Heart right ventricle (tissue), 16 donors: ENCODE measurements at regions of chr13 and their contacts with region 1.

Region 1: DNA sequence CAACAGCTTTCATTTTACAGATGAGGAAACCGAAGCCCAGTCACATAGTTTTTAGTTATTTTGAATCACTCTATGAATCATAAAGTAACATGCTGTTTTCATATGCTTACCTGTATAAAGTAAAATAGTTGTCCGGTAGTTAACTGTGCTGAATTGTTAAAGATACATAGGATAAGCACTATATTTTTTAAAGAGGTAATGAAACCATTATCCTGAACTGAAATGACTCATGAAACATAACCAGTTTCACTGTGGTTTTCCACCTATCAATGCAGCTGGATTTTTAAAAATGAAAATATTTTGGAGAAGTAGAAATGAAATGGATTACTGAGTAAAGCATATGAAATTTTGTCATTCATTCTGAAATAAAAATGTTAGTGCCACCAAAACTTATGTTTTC is 655.0 kb downstream of the OLFM4 start:
- DNase-seq: no peak
- ATAC-seq: no peak
- H3K4me3 ChIP-seq: no peak overlapping the region
- H3K27ac ChIP-seq: no peak overlapping the region
- H3K4me1 ChIP-seq: no peaks in the 10 kb centered on the region
- H3K27me3 ChIP-seq: no peaks in the 10 kb centered on the region
- CTCF ChIP-seq: no peak

Region 2: GRCh38 chr13:53250266-53250875 is 433.2 kb before region 1 on chr13:
- intact Hi-C with region 1: no loop called
- DNase-seq: peak in 1 of 2 donors; percentile 13
- ATAC-seq: peak in 3 of 8 donors; percentile 50 to 69 (median 62)
- H3K4me3 ChIP-seq: no peak overlapping the region
- H3K27ac ChIP-seq: no peak overlapping the region
- H3K4me1 ChIP-seq: no peaks in the 10 kb centered on the region
- H3K27me3 ChIP-seq: no peaks in the 10 kb centered on the region
- CTCF ChIP-seq: peak; percentile 49 to 86 (median 78)

Region 3: DNA sequence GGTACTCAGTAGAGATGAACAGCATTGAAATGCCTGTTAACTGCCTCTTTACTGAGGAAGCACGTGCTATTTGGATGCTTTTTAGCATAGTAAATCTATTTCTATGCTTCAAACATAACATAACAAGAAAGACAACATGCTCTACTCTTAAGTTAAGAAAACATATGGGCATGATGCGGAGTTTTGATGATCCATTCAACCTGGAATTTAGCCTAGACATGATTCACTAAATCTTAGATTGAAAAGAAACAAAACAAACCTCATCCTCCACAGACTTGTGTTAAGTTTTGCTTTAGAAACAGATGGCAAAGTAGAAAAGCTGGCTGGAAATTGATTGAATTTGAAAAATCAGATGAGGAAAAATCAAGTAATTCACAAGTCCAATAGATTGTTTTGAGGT is 61.2 kb before region 1 on chr13:
- intact Hi-C with region 1: no loop called
- DNase-seq: no peak
- ATAC-seq: no peak
- H3K4me3 ChIP-seq: no peak overlapping the region
- H3K27ac ChIP-seq: no peak overlapping the region
- H3K4me1 ChIP-seq: no peaks in the 10 kb centered on the region
- H3K27me3 ChIP-seq: no peaks in the 10 kb centered on the region
- CTCF ChIP-seq: no peak

Region 4: GRCh38 chr13:53703371-53704080 is 19.9 kb after region 1 on chr13:
- intact Hi-C with region 1: loop called in 1 of 10 experiments (anchors 1 kb)
- DNase-seq: no peak
- ATAC-seq: no peak
- H3K4me3 ChIP-seq: no peak overlapping the region
- H3K27ac ChIP-seq: no peak overlapping the region
- H3K4me1 ChIP-seq: no peaks in the 10 kb centered on the region
- H3K27me3 ChIP-seq: no peaks in the 10 kb centered on the region
- CTCF ChIP-seq: no peak